ENCODE measurements at regions of chr2 and their contacts with region 1.

Region 1: GRCh38 chr2:85308896-85309555 is 18.8 kb downstream of the TGOLN2 start:
- DNase-seq: no peak
- H3K4me3 Mint-ChIP-seq: no peak overlapping the region
- H3K27ac Mint-ChIP-seq: no peak overlapping the region
- H3K4me1 Mint-ChIP-seq: peaks cover 6% of the 10 kb centered on the region
- H3K27me3 Mint-ChIP-seq: no peaks in the 10 kb centered on the region
- CTCF ChIP-seq: no peak

Region 2: DNA sequence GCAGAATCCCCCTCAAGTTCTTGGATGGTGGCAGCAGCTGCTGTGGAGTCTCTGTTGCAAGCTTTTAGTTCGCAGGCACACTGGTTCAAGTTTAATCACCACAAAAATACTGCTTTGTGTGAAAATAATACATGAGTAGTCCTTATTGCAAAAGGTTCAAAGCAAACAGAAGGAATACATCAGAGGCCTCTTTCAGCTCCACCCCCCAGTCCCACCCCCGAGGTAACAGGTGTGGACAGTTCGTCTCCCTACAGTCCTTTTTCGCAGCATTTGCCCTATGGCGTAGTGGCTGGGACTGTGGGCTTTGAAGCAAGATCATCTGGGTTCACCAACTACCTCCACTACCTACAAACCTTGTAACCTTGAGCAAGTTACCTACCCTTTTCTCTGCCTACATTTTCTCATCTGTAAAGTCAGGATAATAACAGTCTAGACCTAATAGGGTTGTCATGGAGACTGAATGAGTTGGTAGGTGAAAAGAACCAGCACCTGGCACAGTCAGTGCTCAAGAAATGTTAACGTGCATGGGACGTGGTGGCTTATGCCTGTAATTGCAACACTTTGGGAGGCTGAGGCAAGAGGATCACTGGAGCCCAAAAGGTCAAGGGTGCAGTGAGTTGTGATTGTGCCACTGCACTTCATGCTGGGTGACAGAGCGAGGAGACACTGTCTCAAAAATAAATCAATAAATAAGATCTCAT is 114.1 kb before region 1 on chr2:
- CTCF ChIA-PET with region 1: no interaction called
- POLR2A ChIA-PET with region 1: no interaction called
- intact Hi-C with region 1: no loop called
- DNase-seq: no peak
- H3K4me3 Mint-ChIP-seq: no peak overlapping the region
- H3K27ac Mint-ChIP-seq: no peak overlapping the region
- H3K4me1 Mint-ChIP-seq: no peaks in the 10 kb centered on the region
- H3K27me3 Mint-ChIP-seq: no peaks in the 10 kb centered on the region
- CTCF ChIP-seq: no peak

Region 3: DNA sequence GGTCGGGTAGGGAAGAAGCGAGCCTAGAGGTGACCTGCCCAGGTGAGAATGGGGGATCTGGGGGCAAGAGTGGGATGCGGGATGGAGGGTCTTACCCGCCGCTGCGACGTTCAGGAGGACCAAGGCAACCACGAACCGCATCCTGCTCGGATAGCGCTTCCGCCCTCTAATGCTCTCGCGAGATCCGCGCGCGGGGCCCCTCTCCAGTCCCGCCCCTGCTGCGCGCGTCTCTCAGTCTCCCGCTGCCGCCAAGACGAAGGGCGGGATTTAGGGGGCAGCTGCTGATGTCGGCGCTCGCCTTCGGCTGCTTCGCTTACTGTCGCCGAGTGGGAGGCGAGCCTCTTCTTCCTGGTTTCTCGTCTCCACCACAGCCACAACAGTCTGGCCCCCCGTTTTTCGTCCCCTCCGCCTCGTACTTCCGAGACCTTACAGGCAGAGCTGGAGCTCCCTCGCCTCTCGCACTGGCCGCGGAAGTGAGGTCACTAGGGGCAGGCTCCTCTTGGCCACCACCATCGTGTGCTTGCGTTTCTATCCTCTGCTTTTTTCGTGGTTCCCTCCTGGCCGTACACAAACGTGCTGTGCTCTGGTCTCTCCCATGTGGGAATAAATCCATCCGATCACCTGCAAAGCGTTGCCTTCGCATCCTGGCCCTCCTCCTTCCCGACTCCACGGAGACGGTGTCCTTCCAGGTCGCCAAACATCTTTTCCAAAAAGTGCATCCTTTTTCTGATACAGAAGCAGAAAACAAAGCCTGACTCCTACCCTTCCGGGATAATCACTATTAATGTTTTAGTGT is 19.0 kb after region 1 on chr2 and contains the start of gene TGOLN2:
- CTCF ChIA-PET with region 1: interaction called, 4 read pairs
- POLR2A ChIA-PET with region 1: interaction called, 42 read pairs
- intact Hi-C with region 1: no loop called
- DNase-seq: peak; percentile 92
- H3K4me3 Mint-ChIP-seq: peak within 1 kb of the TSS; percentile 82
- H3K27ac Mint-ChIP-seq: peak within 1 kb of the TSS; percentile 94
- H3K4me1 Mint-ChIP-seq: peaks cover 16% of the 10 kb centered on the region
- H3K27me3 Mint-ChIP-seq: no peaks in the 10 kb centered on the region
- CTCF ChIP-seq: no peak
- total RNA-seq, gene TGOLN2: 62.9 and 65.5 TPM in 2 replicates

Region 4: DNA sequence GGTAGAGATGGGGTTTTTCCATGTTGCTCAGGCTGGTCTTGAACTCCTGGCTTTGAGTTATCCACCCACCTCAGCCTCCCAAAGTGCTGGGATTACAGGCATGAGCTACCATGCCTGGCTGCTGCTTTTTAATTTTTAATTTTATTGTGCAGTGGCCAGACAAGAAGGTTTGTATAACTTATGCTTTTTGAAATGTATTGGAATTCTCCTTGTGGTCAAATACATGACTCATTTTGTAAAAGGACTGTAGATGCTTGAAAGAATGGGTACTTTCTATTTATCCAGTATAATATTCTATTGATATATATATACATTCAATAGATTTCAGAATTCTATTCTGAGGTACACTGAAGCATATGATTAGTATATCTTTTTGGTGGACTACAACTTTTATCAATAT is 662.3 kb after region 1 on chr2:
- CTCF ChIA-PET with region 1: no interaction called
- POLR2A ChIA-PET with region 1: no interaction called
- intact Hi-C with region 1: no loop called
- DNase-seq: no peak
- H3K4me3 Mint-ChIP-seq: no peak overlapping the region
- H3K27ac Mint-ChIP-seq: no peak overlapping the region
- H3K4me1 Mint-ChIP-seq: no peaks in the 10 kb centered on the region
- H3K27me3 Mint-ChIP-seq: no peaks in the 10 kb centered on the region
- CTCF ChIP-seq: no peak

Region 5: GRCh38 chr2:85999061-85999831 is 690.2 kb after region 1 on chr2:
- CTCF ChIA-PET with region 1: no interaction called
- POLR2A ChIA-PET with region 1: no interaction called
- intact Hi-C with region 1: no loop called
- DNase-seq: no peak
- H3K4me3 Mint-ChIP-seq: no peak overlapping the region
- H3K27ac Mint-ChIP-seq: no peak overlapping the region
- H3K4me1 Mint-ChIP-seq: peaks cover 10% of the 10 kb centered on the region
- H3K27me3 Mint-ChIP-seq: no peaks in the 10 kb centered on the region
- CTCF ChIP-seq: no peak

Measured in MCF 10A (cell line).